ENCODE measurements at regions of chr2 and their contacts with region 1.

Region 1: GRCh38 chr2:73736855-73737779 is at the start of gene TPRKB:
- DNase-seq: peak; percentile 99
- H3K4me3 Mint-ChIP-seq: peak within 1 kb of the TSS; percentile 88
- H3K27ac Mint-ChIP-seq: peak within 1 kb of the TSS; percentile 76
- H3K4me1 Mint-ChIP-seq: peaks cover 15% of the 10 kb centered on the region
- H3K27me3 Mint-ChIP-seq: no peaks in the 10 kb centered on the region
- total RNA-seq, gene TPRKB: 30.5 to 32.5 TPM

Region 2: GRCh38 chr2:73697606-73698005 is 39.5 kb before region 1 on chr2:
- CTCF ChIA-PET with region 1: no interaction called
- intact Hi-C with region 1: no loop called
- DNase-seq: no peak
- H3K4me3 Mint-ChIP-seq: no peak overlapping the region
- H3K27ac Mint-ChIP-seq: no peak overlapping the region
- H3K4me1 Mint-ChIP-seq: no peaks in the 10 kb centered on the region
- H3K27me3 Mint-ChIP-seq: peaks cover 7% of the 10 kb centered on the region

Region 3: DNA sequence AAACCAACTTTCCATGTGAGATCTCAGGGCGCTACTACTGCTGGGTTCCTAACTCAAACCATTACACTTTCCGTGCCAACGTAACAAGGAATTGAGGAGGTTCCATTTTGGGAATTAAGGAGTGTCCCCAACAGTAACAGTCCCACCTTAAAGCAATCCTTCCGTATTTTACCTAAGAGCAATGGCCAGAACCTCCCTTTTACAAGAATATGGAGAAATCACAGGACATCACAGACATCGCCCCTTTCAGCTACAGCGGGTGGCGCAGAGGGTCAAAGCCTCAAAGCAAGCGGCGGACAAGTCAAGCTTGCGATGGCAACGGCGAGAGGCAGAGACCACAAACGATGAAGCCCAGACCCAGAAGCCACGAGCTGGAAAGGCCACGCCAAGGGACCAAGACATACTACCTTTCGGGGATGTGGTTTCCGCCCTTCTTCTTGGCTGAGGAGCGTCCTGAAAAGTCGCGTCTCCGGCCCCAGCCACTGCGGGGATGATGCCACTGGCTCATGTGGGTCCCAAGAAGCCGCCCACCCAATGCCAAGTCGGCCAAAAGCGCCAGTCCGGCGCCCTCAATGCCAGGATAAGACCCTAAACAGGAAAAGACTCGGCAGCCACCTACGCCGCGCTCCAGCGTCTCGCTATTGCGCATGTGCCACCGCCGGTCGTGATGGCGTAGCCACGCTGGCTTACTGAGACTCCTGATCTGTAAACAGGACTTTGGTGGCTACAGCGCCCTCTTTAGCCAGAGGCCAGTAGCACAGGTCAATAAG is 42.5 kb after region 1 on chr2 and contains the start of gene DUSP11:
- CTCF ChIA-PET with region 1: interaction called, 6 read pairs
- intact Hi-C with region 1: loop called (anchors 1 kb)
- DNase-seq: peak; percentile 99
- H3K4me3 Mint-ChIP-seq: peak within 1 kb of the TSS; percentile 99
- H3K27ac Mint-ChIP-seq: peak within 1 kb of the TSS; percentile 96
- H3K4me1 Mint-ChIP-seq: peaks cover 24% of the 10 kb centered on the region
- H3K27me3 Mint-ChIP-seq: peaks cover 2% of the 10 kb centered on the region
- total RNA-seq, gene DUSP11: 22.7 to 24.4 TPM

Region 4: GRCh38 chr2:73926493-73927338 is 189.6 kb after region 1 on chr2 and contains the start of gene DGUOK:
- CTCF ChIA-PET with region 1: no interaction called
- intact Hi-C with region 1: loop called (anchors 1 kb)
- DNase-seq: peak; percentile 99
- H3K4me3 Mint-ChIP-seq: peak within 1 kb of the TSS; percentile 87
- H3K27ac Mint-ChIP-seq: peak within 1 kb of the TSS; percentile 94
- H3K4me1 Mint-ChIP-seq: peaks cover 44% of the 10 kb centered on the region
- H3K27me3 Mint-ChIP-seq: no peaks in the 10 kb centered on the region
- total RNA-seq, gene DGUOK: 112 to 115 TPM

Region 5: GRCh38 chr2:74178201-74179062 is 441.3 kb after region 1 on chr2 and contains the start of gene MOB1A:
- CTCF ChIA-PET with region 1: no interaction called
- intact Hi-C with region 1: loop called (anchors 1 kb)
- DNase-seq: peak; percentile 99
- H3K4me3 Mint-ChIP-seq: peak within 1 kb of the TSS; percentile 84
- H3K27ac Mint-ChIP-seq: peak within 1 kb of the TSS; percentile 86
- H3K4me1 Mint-ChIP-seq: peaks cover 44% of the 10 kb centered on the region
- H3K27me3 Mint-ChIP-seq: no peaks in the 10 kb centered on the region
- total RNA-seq, gene MOB1A: 129 to 131 TPM

Measured in activated naive CD4-positive, alpha-beta T cell treated with anti-CD3 and anti-CD28 coated beads for 36 hours (primary cell).